ENCODE measurements at regions of chr1 and their contacts with region 1.

Region 1: GRCh38 chr1:179706339-179706941 is 36.7 kb upstream of the FAM163A start:
- DNase-seq: peak; percentile 23 to 76 (median 58)
- ATAC-seq: peak; percentile 32
- H3K4me3 ChIP-seq: no peak overlapping the region
- H3K4me3 Mint-ChIP-seq: no peak overlapping the region
- H3K27ac ChIP-seq: no peak overlapping the region
- H3K27ac Mint-ChIP-seq: no peak overlapping the region
- H3K4me1 ChIP-seq: peaks cover 6% of the 10 kb centered on the region
- H3K4me1 Mint-ChIP-seq: peaks cover 7% of the 10 kb centered on the region
- H3K27me3 ChIP-seq: no peaks in the 10 kb centered on the region
- H3K27me3 Mint-ChIP-seq: peaks cover 4% of the 10 kb centered on the region
- CTCF ChIP-seq: peak; percentile 65

Region 2: DNA sequence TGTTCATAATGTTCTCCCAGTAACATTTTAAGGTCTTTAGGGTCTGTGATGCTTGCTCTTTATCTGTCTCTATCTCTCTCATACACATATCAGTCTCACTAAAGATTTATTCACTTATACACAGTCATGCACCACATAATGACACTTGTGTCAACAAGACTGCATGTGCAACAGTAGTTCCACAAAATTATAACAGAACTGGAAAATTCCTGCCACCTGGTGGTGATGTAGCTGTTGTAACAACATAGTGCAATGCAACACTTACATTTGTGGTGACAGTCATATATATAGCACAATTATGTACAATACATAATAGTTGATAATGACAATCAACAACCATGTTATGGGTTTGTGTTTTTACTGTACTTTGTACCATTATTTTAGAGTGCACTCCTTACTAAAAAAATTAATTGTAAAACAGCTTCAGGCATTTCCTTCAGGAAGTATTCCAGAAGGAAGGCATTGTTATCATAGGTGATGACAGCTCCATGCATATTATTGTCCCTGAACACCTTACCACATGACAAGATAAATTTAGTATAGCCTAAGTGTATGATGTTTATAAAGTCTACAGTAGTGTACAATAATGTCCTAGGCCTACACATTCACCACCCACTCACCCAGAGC is 106.7 kb before region 1 on chr1:
- CTCF ChIA-PET with region 1: no interaction called
- POLR2A ChIA-PET with region 1: no interaction called
- intact Hi-C with region 1: no loop called
- DNase-seq: peak in 1 of 9 experiments; percentile 5
- ATAC-seq: no peak
- H3K4me3 ChIP-seq: no peak overlapping the region
- H3K4me3 Mint-ChIP-seq: no peak overlapping the region
- H3K27ac ChIP-seq: no peak overlapping the region
- H3K27ac Mint-ChIP-seq: no peak overlapping the region
- H3K4me1 ChIP-seq: no peaks in the 10 kb centered on the region
- H3K4me1 Mint-ChIP-seq: no peaks in the 10 kb centered on the region
- H3K27me3 ChIP-seq: no peaks in the 10 kb centered on the region
- H3K27me3 Mint-ChIP-seq: peaks cover 22% of the 10 kb centered on the region
- CTCF ChIP-seq: no peak

Region 3: DNA sequence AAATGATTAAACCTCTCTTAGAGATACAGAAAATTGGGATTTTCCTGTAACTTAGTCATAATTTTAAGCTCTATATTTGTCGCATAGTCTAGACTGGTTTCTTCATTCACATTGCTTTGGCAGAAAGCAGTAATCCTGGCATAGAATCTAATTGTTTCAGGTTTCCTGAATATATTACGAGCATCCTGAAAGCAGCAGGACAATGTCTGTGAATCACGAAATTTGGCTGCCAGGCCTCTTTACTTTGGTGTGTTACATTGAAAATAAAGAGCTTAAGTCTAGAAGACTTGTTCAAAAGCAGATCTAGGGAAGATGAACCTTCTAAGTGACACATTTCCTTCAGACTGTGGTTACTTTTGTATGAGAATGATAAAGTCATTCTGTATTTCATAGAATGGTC is 42.6 kb before region 1 on chr1:
- CTCF ChIA-PET with region 1: no interaction called
- POLR2A ChIA-PET with region 1: no interaction called
- intact Hi-C with region 1: no loop called
- DNase-seq: no peak
- ATAC-seq: no peak
- H3K4me3 ChIP-seq: no peak overlapping the region
- H3K4me3 Mint-ChIP-seq: no peak overlapping the region
- H3K27ac ChIP-seq: no peak overlapping the region
- H3K27ac Mint-ChIP-seq: no peak overlapping the region
- H3K4me1 ChIP-seq: no peaks in the 10 kb centered on the region
- H3K4me1 Mint-ChIP-seq: no peaks in the 10 kb centered on the region
- H3K27me3 ChIP-seq: no peaks in the 10 kb centered on the region
- H3K27me3 Mint-ChIP-seq: peaks cover 13% of the 10 kb centered on the region
- CTCF ChIP-seq: no peak

Region 4: GRCh38 chr1:180027949-180028445 is 321.6 kb after region 1 on chr1:
- CTCF ChIA-PET with region 1: interaction called, 3 read pairs
- POLR2A ChIA-PET with region 1: no interaction called
- intact Hi-C with region 1: loop called (anchors 5 kb)
- DNase-seq: no peak
- ATAC-seq: no peak
- H3K4me3 ChIP-seq: no peak overlapping the region
- H3K4me3 Mint-ChIP-seq: no peak overlapping the region
- H3K27ac ChIP-seq: no peak overlapping the region
- H3K27ac Mint-ChIP-seq: no peak overlapping the region
- H3K4me1 ChIP-seq: no peaks in the 10 kb centered on the region
- H3K4me1 Mint-ChIP-seq: peaks cover 2% of the 10 kb centered on the region
- H3K27me3 ChIP-seq: no peaks in the 10 kb centered on the region
- H3K27me3 Mint-ChIP-seq: no peaks in the 10 kb centered on the region
- CTCF ChIP-seq: no peak

Measured in CD8-positive, alpha-beta T cell (primary cell).